Endothelial cell of umbilical vein (primary cell): ENCODE measurements at regions of chrX and their contacts with region 1.

Region 1: DNA sequence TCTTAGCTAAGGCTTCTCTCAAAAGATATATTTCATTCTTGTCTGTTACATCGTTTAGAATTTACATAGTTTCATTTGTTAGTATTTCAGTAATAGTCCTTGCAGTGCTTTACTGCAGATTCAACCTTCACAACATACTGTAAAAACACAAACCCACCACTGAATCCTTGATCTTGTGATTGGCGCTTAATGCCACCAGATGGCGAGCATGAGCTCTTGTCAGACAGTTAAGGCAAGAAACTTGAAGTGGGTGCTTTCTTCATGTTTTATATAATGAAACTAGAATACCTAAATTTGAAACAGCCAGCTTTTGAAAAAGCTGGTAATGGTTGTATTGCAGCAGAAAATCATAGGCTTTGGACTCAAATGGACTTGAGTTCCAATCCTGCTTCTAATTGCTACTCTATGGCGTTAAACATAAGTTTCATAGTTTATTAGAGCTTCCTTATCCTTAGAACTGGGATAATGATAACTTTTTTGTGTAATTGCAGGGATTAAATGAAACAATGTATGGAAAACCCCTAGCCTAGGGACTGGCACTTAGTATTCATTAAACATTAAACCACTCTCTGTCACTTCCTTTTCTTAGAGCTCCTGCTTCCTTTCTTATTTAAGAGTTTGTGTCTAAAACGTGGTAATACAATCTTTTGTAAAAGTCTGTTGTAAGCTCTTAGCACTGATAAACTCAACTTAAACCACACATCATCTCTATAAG is 95.1 kb downstream of the USP9X start:
- DNase-seq: peak; percentile 66
- H3K4me3 ChIP-seq: no peak overlapping the region
- H3K27ac ChIP-seq: no peak overlapping the region
- H3K4me1 ChIP-seq: peaks cover 3% of the 10 kb centered on the region
- H3K27me3 ChIP-seq: no peaks in the 10 kb centered on the region
- CTCF ChIP-seq: peak; percentile 45 to 52
- POLR2A ChIP-seq: no peak

Region 2: DNA sequence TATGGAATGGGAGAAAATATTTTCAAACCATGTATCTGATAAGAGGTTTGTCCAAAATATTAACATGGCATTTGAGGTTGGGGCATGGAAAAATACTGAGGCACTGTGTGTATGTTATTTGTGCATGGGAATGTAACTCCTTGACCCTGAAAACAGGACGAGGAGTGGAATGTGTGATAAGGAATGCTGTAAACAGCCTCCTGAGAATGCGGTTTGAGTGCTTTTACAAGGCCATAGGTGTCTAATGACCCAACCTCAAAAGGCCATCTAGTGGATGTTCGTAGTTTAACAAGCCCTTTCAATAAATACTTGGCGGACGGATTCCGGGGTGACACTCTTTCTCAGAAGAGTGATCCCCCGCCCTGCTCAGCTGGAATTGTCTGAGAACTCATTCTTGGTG is 258.0 kb before region 1 on chrX:
- CTCF ChIA-PET with region 1: no interaction called
- POLR2A ChIA-PET with region 1: no interaction called
- dilution Hi-C with region 1: no loop called
- intact Hi-C with region 1: no loop called
- DNase-seq: peak; percentile 76
- H3K4me3 ChIP-seq: no peak overlapping the region
- H3K27ac ChIP-seq: no peak overlapping the region
- H3K4me1 ChIP-seq: peaks cover 4% of the 10 kb centered on the region
- H3K27me3 ChIP-seq: no peaks in the 10 kb centered on the region
- CTCF ChIP-seq: peak; percentile 12 to 20
- POLR2A ChIP-seq: no peak

Region 3: GRCh38 chrX:41137589-41137988 is 42.8 kb before region 1 on chrX:
- CTCF ChIA-PET with region 1: interaction called, 10 read pairs
- POLR2A ChIA-PET with region 1: no interaction called
- dilution Hi-C with region 1: no loop called
- intact Hi-C with region 1: no loop called
- DNase-seq: no peak
- H3K4me3 ChIP-seq: no peak overlapping the region
- H3K27ac ChIP-seq: no peak overlapping the region
- H3K4me1 ChIP-seq: no peaks in the 10 kb centered on the region
- H3K27me3 ChIP-seq: no peaks in the 10 kb centered on the region
- CTCF ChIP-seq: no peak
- POLR2A ChIP-seq: no peak

Region 4: DNA sequence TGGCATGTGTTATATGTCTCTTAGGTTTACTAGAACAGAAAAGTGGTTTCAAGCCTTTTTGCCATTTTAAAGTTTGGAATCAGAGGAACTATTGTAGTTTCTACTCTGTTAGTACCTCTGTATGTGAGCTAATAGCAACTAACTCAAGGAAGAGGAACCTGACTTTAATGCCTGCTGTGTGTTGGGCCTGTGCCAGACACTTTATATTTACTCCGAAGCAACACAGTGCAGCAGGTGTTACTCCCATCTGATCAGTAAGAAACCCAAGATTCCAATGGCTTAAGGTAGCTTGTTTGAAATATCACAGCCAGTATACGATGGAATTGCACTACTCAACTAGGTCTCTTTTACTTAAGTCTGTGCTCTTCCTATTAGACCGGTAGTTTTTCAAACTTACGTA is 15.9 kb before region 1 on chrX:
- CTCF ChIA-PET with region 1: interaction called, 24 read pairs
- POLR2A ChIA-PET with region 1: no interaction called
- dilution Hi-C with region 1: no loop called
- intact Hi-C with region 1: no loop called
- DNase-seq: no peak
- H3K4me3 ChIP-seq: no peak overlapping the region
- H3K27ac ChIP-seq: no peak overlapping the region
- H3K4me1 ChIP-seq: peaks cover 12% of the 10 kb centered on the region
- H3K27me3 ChIP-seq: no peaks in the 10 kb centered on the region
- CTCF ChIP-seq: no peak
- POLR2A ChIP-seq: no peak

Region 5: GRCh38 chrX:41250867-41251266 is 70.5 kb after region 1 on chrX:
- CTCF ChIA-PET with region 1: interaction called, 34 read pairs
- POLR2A ChIA-PET with region 1: no interaction called
- dilution Hi-C with region 1: no loop called
- intact Hi-C with region 1: loop called (anchors 1 kb)
- DNase-seq: peak; percentile 59
- H3K4me3 ChIP-seq: no peak overlapping the region
- H3K27ac ChIP-seq: peak overlapping the region; percentile 59
- H3K4me1 ChIP-seq: no peaks in the 10 kb centered on the region
- H3K27me3 ChIP-seq: no peaks in the 10 kb centered on the region
- CTCF ChIP-seq: no peak
- POLR2A ChIP-seq: no peak

Region 6: GRCh38 chrX:41258226-41258625 is 77.9 kb after region 1 on chrX:
- CTCF ChIA-PET with region 1: interaction called, 34 read pairs
- POLR2A ChIA-PET with region 1: no interaction called
- dilution Hi-C with region 1: no loop called
- intact Hi-C with region 1: loop called (anchors 1 kb)
- DNase-seq: no peak
- H3K4me3 ChIP-seq: no peak overlapping the region
- H3K27ac ChIP-seq: no peak overlapping the region
- H3K4me1 ChIP-seq: no peaks in the 10 kb centered on the region
- H3K27me3 ChIP-seq: no peaks in the 10 kb centered on the region
- CTCF ChIP-seq: no peak
- POLR2A ChIP-seq: no peak